Activated CD8-positive, alpha-beta memory T cell treated with anti-CD3 and anti-CD28 coated beads, Interleukin-2, amount 10 ng/mL, durations not matched to agents 7 days and 5 days (primary cell): ENCODE measurements at regions of chr14 and their contacts with region 1.

Region 1: GRCh38 chr14:95527387-95528002 is 7.4 kb upstream of the GLRX5 start:
- DNase-seq: peak; percentile 72
- ATAC-seq: no peak
- H3K4me3 Mint-ChIP-seq: no peak overlapping the region
- H3K27ac Mint-ChIP-seq: peak overlapping the region; percentile 95
- H3K4me1 Mint-ChIP-seq: peaks cover 82% of the 10 kb centered on the region
- H3K27me3 Mint-ChIP-seq: no peaks in the 10 kb centered on the region

Region 2: GRCh38 chr14:95442633-95443021 is 84.9 kb before region 1 on chr14:
- CTCF ChIA-PET with region 1: interaction called, 130 read pairs
- DNase-seq: peak; percentile 79
- ATAC-seq: peak; percentile 95
- H3K4me3 Mint-ChIP-seq: no peak overlapping the region
- H3K27ac Mint-ChIP-seq: peak overlapping the region; percentile 58
- H3K4me1 Mint-ChIP-seq: peaks cover 4% of the 10 kb centered on the region
- H3K27me3 Mint-ChIP-seq: no peaks in the 10 kb centered on the region

Region 3: DNA sequence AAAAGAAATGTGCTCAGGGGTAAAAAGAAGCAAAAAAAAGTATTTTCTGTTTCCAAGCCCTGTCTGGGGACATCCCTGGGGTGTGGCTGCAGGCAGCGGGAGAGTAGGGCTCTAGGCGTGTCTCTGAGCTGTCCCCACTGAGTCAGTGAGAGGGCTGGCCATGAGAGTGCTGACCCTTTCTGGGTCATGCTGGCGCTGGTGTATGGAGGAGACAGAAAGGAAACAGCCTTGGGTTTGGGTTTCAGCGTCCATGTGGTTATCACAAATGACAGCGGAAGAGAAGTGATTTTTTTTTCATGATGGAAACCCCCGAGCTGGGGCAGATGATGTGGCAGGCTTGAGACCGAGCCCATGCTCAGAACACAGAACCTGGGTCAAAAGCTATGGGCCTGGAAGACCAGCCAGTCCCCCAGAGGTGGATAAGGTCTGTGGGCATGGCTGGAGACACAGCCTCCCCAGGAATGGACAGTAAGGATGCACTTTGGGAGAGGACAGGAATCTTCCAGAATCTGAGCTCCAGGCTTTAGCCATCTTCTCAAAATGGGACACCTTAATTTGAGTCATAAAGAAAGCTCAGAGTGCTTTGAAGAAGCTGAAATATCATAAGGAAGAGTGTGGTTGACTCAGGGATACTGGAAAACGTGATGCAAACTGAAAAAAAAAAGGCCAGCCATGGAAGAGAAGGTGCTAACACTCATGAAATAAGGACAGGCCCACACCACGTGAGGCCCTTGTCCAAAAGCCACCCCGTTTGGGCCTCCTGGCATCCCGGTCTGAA is 47.2 kb before region 1 on chr14:
- CTCF ChIA-PET with region 1: interaction called, 15 read pairs
- DNase-seq: peak; percentile 64
- ATAC-seq: peak; percentile 80
- H3K4me3 Mint-ChIP-seq: peak overlapping the region; percentile 1
- H3K27ac Mint-ChIP-seq: peak overlapping the region; percentile 83
- H3K4me1 Mint-ChIP-seq: peaks cover 41% of the 10 kb centered on the region
- H3K27me3 Mint-ChIP-seq: no peaks in the 10 kb centered on the region

Region 4: DNA sequence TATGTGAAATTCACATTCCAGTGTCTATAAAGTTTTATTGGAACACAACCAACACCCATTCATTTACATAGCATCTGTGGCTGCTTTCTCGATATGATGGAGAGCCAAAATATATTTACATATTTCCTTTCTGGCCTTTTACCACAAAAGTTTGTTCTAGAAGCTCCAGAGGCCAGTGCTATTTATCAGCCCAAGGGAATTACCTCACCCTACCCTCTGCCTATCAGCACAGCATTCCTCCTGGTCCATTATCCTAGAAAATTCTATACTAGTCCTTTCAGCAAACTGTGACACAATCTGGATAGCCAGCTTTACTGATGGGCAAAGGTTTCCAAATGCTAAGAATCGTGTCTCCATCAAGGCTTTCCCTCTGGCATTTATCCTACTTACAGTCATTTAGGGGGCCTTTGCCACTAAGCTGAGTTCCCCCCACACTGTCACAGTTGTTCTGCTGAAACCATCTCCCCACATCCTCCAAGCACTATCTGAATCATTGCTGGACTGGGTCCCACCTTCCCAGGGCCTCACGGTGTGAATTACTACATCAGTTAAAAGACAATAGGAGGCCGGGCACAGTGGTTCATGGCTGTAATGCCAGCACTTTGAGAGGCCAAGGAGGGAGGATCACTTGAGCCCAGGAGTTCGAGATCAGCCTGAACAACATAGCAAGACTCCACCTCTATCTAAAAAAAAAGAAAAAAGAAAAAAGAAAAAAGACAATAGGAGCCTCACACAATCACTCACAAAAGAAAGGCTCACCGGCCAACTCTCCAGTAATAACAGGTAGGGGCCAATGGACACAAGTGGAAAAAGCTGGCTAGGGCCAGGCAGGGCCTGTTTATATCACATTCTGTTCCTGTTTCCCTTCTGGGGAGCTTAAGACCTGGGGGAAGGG is 23.1 kb before region 1 on chr14:
- CTCF ChIA-PET with region 1: interaction called, 12 read pairs
- DNase-seq: peak; percentile 75
- ATAC-seq: peak; percentile 84
- H3K4me3 Mint-ChIP-seq: peak overlapping the region; percentile 27
- H3K27ac Mint-ChIP-seq: peak overlapping the region; percentile 74
- H3K4me1 Mint-ChIP-seq: peaks cover 84% of the 10 kb centered on the region
- H3K27me3 Mint-ChIP-seq: no peaks in the 10 kb centered on the region